Transverse colon (tissue), 4 donors: ENCODE measurements at regions of chr1 and their contacts with region 1.

Region 1: DNA sequence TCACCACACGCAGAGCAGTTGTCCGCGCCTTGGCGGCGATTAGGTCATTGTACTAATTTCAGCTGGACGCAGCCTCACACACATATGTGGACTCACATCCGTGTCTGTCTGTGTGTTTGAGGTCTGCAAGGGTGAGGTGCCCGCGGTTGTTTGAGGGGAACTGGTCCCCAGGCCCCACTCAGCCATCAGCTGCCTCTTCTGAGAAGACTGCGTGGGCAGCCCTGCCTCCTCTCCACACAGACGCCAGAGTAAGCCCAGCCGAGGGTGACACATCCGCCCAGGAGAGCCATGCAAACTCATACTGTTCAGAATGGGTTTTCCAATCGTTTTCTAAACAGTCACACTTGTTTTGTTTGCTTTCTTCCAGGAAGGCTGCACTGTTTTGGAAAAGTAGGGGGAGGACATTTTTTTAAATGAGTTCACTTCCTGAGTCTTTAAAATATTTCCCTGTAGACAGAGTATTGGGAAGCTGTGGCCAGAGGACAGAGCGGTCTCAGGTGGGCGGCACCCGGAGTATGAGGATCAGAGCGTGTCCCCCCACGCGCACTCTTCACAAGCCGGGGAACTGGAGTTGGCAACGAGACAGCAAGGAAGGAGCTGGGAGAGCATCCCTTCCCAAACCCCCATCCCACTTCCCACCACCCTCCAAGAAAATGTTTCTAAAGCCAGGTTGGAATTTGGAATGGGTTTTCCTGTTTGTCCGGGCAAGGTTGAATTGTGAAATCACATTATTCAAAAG is 53.3 kb downstream of the TOMM20 start:
- DNase-seq: peak; percentile 58
- H3K4me3 ChIP-seq: no peak overlapping the region
- H3K27ac ChIP-seq: peak overlapping the region; percentile 86 to 91 (median 90)
- H3K4me1 ChIP-seq: peaks cover 47 to 61% (median 49%) of the 10 kb centered on the region in 4 donors
- H3K27me3 ChIP-seq: no peaks in the 10 kb centered on the region
- CTCF ChIP-seq: no peak
- EP300 ChIP-seq: peak; percentile 3
- POLR2A ChIP-seq: no peak

Region 2: DNA sequence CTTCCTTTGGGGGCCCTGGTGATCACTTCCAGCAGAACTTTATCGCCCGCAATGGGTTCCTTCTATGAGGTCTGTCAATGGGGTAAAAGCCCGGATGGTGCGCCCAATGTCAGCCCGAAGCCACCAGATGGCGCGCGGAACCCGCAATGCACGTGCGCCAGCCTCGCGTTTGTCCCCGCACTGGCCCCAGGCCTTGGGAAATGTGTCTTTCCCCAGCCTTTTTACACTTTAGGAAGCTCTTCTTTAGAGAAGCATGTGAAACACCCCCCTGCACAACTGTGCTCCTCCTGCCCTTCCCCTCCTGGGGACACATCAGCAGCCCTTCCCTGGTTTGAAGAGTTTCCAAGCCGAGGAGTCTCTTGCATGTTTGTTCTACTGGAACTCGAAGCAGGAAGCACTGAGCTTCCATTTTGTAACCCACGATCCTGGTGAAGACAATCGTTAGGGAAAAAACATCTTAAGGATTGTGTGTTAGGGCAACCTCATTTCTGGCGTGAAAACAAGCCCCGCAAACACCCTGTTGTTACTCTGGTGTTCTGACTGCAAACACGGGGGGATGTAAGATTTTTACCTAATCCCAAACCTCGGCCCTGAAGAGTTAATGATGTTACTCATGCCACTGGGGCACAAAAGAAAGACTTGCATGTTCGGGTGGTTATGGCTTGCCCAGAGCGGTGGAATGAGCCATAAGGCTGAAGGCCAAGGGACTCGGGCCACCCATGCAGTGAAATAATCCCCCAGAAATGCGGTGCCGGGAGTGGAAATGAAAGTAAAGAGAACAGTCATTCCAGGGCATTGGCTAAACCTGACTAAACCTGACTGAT is 576.0 kb before region 1 on chr1:
- in situ Hi-C with region 1: loop called in 2 of 4 experiments (anchors 5 to 10 kb)
- intact Hi-C with region 1: loop called (anchors 5 kb)
- DNase-seq: peak; percentile 93
- H3K4me3 ChIP-seq: peak overlapping the region in 1 of 4 donors; percentile 21
- H3K27ac ChIP-seq: peak overlapping the region; percentile 84 to 87 (median 86)
- H3K4me1 ChIP-seq: peaks cover 8 to 25% (median 18%) of the 10 kb centered on the region in 4 donors
- H3K27me3 ChIP-seq: no peaks in the 10 kb centered on the region
- CTCF ChIP-seq: peak; percentile 90 to 97 (median 92)
- EP300 ChIP-seq: no peak
- POLR2A ChIP-seq: peak; percentile 19

Region 3: GRCh38 chr1:234599617-234600417 is 475.5 kb before region 1 on chr1:
- in situ Hi-C with region 1: loop called in 3 of 4 experiments (anchors 5 to 10 kb)
- intact Hi-C with region 1: no loop called
- DNase-seq: peak; percentile 92
- H3K4me3 ChIP-seq: peak overlapping the region; percentile 13 to 56 (median 43)
- H3K27ac ChIP-seq: peak overlapping the region; percentile 98 to 100 (median 99)
- H3K4me1 ChIP-seq: peaks cover 26 to 66% (median 57%) of the 10 kb centered on the region in 4 donors
- H3K27me3 ChIP-seq: no peaks in the 10 kb centered on the region
- CTCF ChIP-seq: peak in 1 of 5 experiments; percentile 24
- EP300 ChIP-seq: peak; percentile 31
- POLR2A ChIP-seq: peak; percentile 81

Region 4: DNA sequence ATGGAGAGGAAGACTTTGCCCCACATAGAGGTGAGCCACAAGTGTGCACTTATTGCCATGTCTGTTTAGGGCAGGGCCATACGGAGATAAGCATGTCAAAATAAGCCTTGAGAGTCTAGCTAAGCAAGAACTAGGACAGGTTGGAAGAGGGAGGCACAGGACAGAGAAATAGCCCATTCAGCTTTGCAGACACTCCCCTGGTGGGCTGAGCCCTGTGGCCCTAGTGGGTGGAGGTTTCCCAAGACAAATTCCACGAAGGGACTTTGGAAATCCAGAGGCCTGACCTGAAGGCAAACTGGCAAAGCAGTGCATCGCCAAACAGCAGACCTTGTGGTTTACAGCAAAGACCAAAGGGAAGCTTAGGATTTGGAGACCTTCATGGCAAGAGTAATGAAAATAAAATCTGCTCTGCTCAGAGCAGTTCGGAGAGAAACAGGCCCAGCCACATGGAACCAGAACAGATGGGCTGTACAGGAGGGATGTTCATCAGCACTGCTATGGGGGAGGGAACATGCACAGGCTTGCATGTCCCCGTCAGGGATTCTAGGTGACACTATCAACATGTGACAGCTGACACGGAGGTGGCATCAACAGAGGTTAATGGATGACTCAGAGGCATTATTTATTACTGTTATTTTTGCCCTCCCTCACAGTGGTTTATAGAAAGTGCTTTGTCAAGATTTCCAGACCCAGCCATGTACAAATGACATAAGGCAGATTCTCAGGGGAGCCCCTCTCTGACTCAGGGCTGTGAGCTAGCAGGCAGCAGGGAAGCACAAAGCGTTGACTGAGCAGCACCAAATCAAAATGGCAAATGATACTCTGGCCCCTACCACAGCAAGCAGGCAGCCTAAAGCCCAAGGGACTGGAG is 375.3 kb before region 1 on chr1:
- in situ Hi-C with region 1: loop called in 1 of 4 experiments (anchors 25 kb)
- intact Hi-C with region 1: no loop called
- DNase-seq: no peak
- H3K4me3 ChIP-seq: no peak overlapping the region
- H3K27ac ChIP-seq: peak overlapping the region; percentile 62 to 75 (median 70)
- H3K4me1 ChIP-seq: peaks cover 14 to 26% (median 19%) of the 10 kb centered on the region in 4 donors
- H3K27me3 ChIP-seq: no peaks in the 10 kb centered on the region
- CTCF ChIP-seq: peak in 1 of 5 experiments; percentile 16
- EP300 ChIP-seq: no peak
- POLR2A ChIP-seq: no peak

Region 5: GRCh38 chr1:234722904-234723720 is 352.2 kb before region 1 on chr1:
- in situ Hi-C with region 1: loop called (anchors 10 to 25 kb)
- intact Hi-C with region 1: no loop called
- DNase-seq: peak; percentile 73
- H3K4me3 ChIP-seq: peak overlapping the region in 1 of 4 donors; percentile 14
- H3K27ac ChIP-seq: peak overlapping the region; percentile 97 to 99 (median 98)
- H3K4me1 ChIP-seq: peaks cover 73 to 93% (median 77%) of the 10 kb centered on the region in 4 donors
- H3K27me3 ChIP-seq: no peaks in the 10 kb centered on the region
- CTCF ChIP-seq: no peak
- EP300 ChIP-seq: no peak
- POLR2A ChIP-seq: no peak

Region 6: DNA sequence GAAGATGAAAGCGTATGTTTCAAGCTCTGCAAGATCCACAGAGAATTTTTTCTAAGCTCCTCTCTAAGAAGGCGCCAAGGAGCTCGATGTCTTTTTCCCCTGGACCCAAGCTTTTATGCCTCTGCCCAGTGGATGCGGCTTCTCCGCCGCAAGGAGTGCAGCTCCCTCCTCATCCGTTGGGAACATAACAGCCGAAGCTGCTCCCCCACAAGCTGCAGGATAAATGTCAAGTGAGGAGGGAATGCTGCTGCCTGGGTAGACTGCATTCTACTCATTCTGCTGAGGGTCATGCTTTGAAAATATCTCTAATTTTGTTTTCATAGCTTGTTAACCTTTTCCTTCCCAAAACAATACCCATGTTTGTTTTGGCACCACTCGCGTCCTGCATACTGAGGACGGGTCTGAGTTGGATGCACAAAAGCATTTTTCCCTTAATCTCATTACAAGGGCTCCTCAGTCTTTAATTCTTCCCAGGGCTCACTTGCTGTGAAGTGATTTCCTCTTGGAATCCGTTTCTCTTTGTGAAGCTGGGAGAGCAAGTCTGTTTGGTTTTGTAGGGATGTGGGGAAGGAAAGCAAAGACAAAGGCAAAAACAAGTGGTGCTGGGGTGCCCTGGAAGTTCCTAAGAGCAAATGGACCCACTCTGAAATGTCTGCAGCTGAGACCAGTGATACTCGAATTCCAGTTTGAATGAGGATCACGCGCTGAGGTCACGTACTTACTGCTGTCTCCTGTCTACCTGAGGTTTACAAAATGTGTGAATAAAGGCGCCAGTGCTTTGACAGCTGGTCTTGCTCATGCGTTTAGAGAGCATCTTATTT is 331.4 kb before region 1 on chr1:
- in situ Hi-C with region 1: no loop called
- intact Hi-C with region 1: no loop called
- DNase-seq: no peak
- H3K4me3 ChIP-seq: no peak overlapping the region
- H3K27ac ChIP-seq: peak overlapping the region; percentile 10 to 43 (median 32)
- H3K4me1 ChIP-seq: peaks cover 0 to 11% (median 4%) of the 10 kb centered on the region in 4 donors
- H3K27me3 ChIP-seq: no peaks in the 10 kb centered on the region
- CTCF ChIP-seq: no peak
- EP300 ChIP-seq: no peak
- POLR2A ChIP-seq: no peak

Region 7: GRCh38 chr1:234842726-234843641 is 232.4 kb before region 1 on chr1:
- in situ Hi-C with region 1: loop called in 1 of 4 experiments (anchors 10 kb)
- intact Hi-C with region 1: no loop called
- DNase-seq: no peak
- H3K4me3 ChIP-seq: no peak overlapping the region
- H3K27ac ChIP-seq: peak overlapping the region in 3 of 4 donors; percentile 13 to 34 (median 17)
- H3K4me1 ChIP-seq: peaks cover 0 to 39% (median 10%) of the 10 kb centered on the region in 4 donors
- H3K27me3 ChIP-seq: no peaks in the 10 kb centered on the region
- CTCF ChIP-seq: no peak
- EP300 ChIP-seq: no peak
- POLR2A ChIP-seq: no peak

Region 8: GRCh38 chr1:234978397-234979295 is 96.7 kb before region 1 on chr1:
- in situ Hi-C with region 1: loop called in 3 of 4 experiments (anchors 10 kb)
- intact Hi-C with region 1: no loop called
- DNase-seq: peak; percentile 79
- H3K4me3 ChIP-seq: peak overlapping the region in 1 of 4 donors; percentile 17
- H3K27ac ChIP-seq: peak overlapping the region; percentile 88 to 91 (median 88)
- H3K4me1 ChIP-seq: peaks cover 59 to 80% (median 66%) of the 10 kb centered on the region in 4 donors
- H3K27me3 ChIP-seq: no peaks in the 10 kb centered on the region
- CTCF ChIP-seq: peak in 3 of 5 experiments; percentile 5 to 15 (median 15)
- EP300 ChIP-seq: peak; percentile 31
- POLR2A ChIP-seq: no peak

Region 9: GRCh38 chr1:235030919-235031596 is 44.3 kb before region 1 on chr1:
- in situ Hi-C with region 1: no loop called
- intact Hi-C with region 1: no loop called
- DNase-seq: no peak
- H3K4me3 ChIP-seq: no peak overlapping the region
- H3K27ac ChIP-seq: no peak overlapping the region
- H3K4me1 ChIP-seq: peaks cover 0 to 10% (median 3%) of the 10 kb centered on the region in 4 donors
- H3K27me3 ChIP-seq: no peaks in the 10 kb centered on the region
- CTCF ChIP-seq: no peak
- EP300 ChIP-seq: no peak
- POLR2A ChIP-seq: no peak